ENCODE measurements at regions of chr7 and their contacts with region 1.

Region 1: GRCh38 chr7:5243261-5243660 is 39.5 kb upstream of the SLC29A4 start:
- DNase-seq: no peak
- H3K4me3 ChIP-seq: no peak overlapping the region
- H3K27ac ChIP-seq: no peak overlapping the region
- H3K27me3 ChIP-seq: no peaks in the 10 kb centered on the region
- CTCF ChIP-seq: no peak

Region 2: GRCh38 chr7:5284304-5285281 is 41.3 kb after region 1 on chr7:
- intact Hi-C with region 1: loop called in 1 of 2 experiments (anchors 5 kb)
- DNase-seq: peak in 9 of 10 donors; percentile 27 to 73 (median 61)
- H3K4me3 ChIP-seq: peak overlapping the region in 21 of 59 donors; percentile 16 to 70 (median 62)
- H3K27ac ChIP-seq: peak overlapping the region in 1 of 59 donors; percentile 27
- H3K27me3 ChIP-seq: no peaks in the 10 kb centered on the region
- CTCF ChIP-seq: peak in 12 of 56 donors; percentile 4 to 38 (median 22)

Measured in dorsolateral prefrontal cortex (tissue), 120 donors.